ENCODE measurements at regions of chr17 and their contacts with region 1.

Region 1: GRCh38 chr17:76296186-76296585 is 11.9 kb downstream of the QRICH2 start:
- DNase-seq: no peak
- H3K4me3 ChIP-seq: no peak overlapping the region
- CTCF ChIP-seq: no peak

Region 2: DNA sequence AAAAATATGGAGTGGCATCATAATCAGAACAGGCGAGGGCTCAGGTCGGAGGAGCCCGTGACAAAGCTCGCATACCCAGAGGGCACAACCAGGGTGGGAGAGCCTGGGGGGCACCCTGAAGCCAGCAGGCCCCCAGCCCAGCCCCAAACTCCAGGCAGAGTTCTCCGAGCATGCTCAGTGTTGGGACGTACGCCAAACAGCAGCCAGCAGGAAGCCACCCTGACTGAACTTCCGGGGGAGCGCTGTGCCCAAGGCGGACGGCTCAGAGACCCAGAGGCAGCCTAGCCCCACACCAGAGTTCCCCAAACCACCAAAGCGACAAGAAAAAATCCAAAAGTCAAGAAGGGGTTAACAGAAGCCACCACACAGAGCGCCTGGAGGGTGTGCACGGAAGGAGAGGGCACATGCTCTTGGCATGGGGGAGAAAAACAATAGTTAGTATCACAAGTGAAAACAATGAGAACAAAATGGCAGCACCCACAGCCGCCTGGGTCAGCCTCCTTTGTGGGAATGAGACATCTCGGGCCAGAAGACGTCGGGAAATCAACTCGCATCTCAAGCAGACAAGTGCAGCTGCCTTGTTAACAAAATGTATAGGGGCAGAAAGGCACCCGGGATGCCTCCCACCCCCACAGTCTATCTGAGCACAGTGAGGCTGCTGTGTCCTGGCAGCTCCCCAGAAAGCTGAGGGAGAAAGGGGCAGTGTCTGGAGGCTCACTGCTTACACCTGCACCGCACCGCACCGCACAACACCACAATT is 204.5 kb before region 1 on chr17:
- CTCF ChIA-PET with region 1: no interaction called
- POLR2A ChIA-PET with region 1: no interaction called
- DNase-seq: no peak
- H3K4me3 ChIP-seq: no peak overlapping the region
- CTCF ChIP-seq: no peak

Region 3: GRCh38 chr17:76121932-76122430 is 174.2 kb before region 1 on chr17:
- CTCF ChIA-PET with region 1: interaction called, 26 read pairs
- POLR2A ChIA-PET with region 1: no interaction called
- DNase-seq: no peak
- H3K4me3 ChIP-seq: peak overlapping the region; percentile 23
- CTCF ChIP-seq: no peak

Region 4: DNA sequence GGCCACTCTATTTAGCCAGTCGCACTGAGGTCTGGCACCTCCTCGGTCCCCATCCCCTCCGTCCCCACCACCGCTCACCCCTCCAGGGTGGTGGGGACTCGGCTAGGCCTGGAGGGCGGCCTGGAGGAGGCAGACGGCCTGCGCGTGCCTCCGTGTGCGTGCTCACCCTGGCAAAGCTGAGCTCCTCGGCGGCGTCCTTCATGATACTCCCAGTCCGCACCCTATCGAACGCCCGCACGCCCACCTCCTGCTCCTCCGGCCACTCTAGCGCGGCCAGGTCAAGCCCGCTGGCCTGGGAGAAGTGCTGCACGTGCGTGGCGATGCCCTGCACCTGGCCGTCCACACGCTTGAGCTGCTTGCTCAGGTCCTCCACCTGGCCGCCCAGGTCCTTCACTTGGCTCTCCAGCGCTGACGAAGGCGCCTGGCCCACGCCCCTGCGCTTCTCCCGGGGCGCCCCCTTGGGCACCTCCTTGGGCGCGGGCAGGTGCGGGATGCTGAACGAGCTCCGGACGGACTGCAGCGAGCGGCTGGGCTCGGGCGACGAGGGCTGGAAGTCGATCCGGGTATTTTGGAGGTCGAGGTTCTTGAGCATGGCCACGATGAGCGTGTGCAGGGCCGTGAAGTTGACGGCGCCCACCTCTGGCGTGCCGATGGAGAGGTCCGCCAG is 11.2 kb after region 1 on chr17:
- CTCF ChIA-PET with region 1: interaction called, 52 read pairs
- POLR2A ChIA-PET with region 1: no interaction called
- DNase-seq: no peak
- H3K4me3 ChIP-seq: no peak overlapping the region
- CTCF ChIP-seq: no peak

Region 5: GRCh38 chr17:76314392-76315227 is 18.4 kb after region 1 on chr17:
- CTCF ChIA-PET with region 1: interaction called, 52 read pairs
- POLR2A ChIA-PET with region 1: no interaction called
- DNase-seq: no peak
- H3K4me3 ChIP-seq: no peak overlapping the region
- CTCF ChIP-seq: no peak

Region 6: GRCh38 chr17:76327696-76328095 is 31.5 kb after region 1 on chr17:
- CTCF ChIA-PET with region 1: interaction called, 13 read pairs
- POLR2A ChIA-PET with region 1: no interaction called
- DNase-seq: no peak
- H3K4me3 ChIP-seq: no peak overlapping the region
- CTCF ChIP-seq: no peak

Region 7: DNA sequence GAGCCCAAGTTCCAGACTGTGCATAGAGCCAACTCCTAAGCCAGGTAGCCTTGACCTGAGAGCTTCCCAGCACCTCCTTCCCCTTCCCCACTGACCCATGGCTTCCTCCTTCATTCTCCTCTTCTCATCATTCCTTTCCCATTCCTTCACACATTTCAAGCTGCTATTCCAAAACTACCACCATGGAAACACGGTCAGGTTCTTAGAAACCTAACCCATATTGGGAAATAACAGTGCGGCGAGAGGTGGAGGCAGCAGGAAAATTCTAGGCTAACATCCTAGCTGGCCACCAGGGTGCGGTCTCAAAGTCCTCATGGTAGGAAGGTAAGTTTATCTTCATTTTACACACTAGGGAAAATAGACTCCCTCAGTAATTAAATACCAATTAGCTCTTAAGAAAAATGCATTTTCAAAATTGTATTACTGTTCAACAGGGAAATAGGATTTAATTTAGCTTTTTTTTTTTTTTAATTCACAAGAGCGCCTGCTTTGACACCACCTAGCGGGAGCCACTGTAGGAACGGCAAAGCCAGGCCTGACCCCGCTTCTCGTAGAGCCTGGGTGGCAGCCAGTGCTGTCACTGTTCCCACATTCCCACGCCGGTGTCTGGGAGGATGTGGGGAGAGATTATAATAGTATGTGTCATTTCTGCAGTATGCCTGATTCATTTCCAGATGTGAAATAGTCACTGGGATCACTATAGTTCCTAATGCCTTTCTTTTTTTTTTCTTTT is 74.2 kb after region 1 on chr17:
- CTCF ChIA-PET with region 1: interaction called, 17 read pairs
- POLR2A ChIA-PET with region 1: no interaction called
- DNase-seq: peak; percentile 67
- H3K4me3 ChIP-seq: no peak overlapping the region
- CTCF ChIP-seq: peak; percentile 68

Measured in AG04449 (cell line).